Activated naive CD4-positive, alpha-beta T cell treated with anti-CD3 and anti-CD28 coated beads for 36 hours (primary cell): ENCODE measurements at regions of chr7 and their contacts with region 1.

Region 1: DNA sequence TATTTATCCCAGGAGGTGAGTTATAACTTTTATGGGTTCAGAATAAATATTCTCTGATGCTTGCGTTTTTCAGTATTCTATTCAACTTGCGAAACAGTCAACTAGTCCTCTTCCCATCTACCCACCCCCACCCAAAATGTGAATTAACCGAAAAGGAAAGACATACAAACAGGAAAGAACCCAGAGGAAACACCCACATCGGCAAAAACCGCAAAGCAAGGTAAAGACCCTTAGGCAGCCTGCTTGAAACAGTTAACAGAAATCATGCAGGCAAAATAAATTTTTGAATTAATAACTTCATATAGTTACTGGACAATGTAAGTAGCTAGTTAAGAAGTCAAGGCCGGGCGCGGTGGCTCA is 5.4 kb downstream of the ZC3HAV1 start:
- DNase-seq: peak; percentile 78
- H3K4me3 Mint-ChIP-seq: peak overlapping the region; percentile 82
- H3K27ac Mint-ChIP-seq: peak overlapping the region; percentile 97
- H3K4me1 Mint-ChIP-seq: peaks cover 35% of the 10 kb centered on the region
- H3K27me3 Mint-ChIP-seq: no peaks in the 10 kb centered on the region

Region 2: DNA sequence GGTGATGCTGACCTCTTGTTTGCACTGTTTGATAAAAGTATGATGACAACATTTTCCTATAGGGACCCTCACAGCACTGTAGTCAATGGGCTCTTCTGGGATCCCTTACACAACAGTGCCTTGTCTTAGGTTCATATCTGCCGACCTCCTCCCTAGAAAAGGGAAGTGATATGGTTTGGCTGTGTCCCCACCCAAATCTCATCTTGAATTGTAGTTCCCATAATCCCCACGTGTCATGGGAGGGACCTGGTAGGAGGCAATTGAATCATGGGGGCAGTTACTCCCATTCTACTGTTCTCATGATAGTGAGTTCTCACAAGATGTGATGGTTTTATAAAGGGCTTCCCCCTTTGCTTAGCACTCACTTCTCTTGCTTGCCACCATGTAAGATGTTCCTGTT is 17.6 kb before region 1 on chr7:
- CTCF ChIA-PET with region 1: interaction called, 27 read pairs
- intact Hi-C with region 1: loop called (anchors 1 kb)
- DNase-seq: no peak
- H3K4me3 Mint-ChIP-seq: no peak overlapping the region
- H3K27ac Mint-ChIP-seq: peak overlapping the region; percentile 89
- H3K4me1 Mint-ChIP-seq: peaks cover 85% of the 10 kb centered on the region
- H3K27me3 Mint-ChIP-seq: no peaks in the 10 kb centered on the region

Region 3: DNA sequence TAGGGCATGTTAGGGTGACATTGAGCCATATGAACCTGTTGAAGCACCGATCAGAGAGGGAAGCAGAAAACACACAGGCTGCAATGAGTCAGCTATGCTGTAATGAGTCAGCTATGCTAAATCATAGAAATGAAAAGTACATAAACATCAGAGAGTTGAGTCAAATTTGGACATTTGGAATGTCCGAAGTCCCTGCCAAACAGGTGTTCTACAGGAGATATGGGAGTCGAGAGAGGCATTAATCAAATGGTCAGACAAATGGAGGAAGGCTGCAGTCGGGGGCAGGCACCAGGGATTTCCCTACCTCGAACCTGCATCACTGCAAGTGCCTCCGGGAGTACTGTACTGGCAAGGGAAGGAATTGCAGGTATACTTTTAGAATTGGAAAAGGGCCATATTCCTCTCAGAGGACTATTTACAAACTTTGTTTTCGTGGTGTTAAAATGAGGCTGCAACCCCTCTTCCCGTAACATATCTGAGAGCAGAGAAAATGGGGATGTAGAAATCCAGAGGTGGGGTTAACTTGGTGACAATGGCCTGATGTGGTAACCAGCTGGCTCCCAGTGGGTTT is 14.2 kb after region 1 on chr7:
- CTCF ChIA-PET with region 1: interaction called, 4 read pairs
- intact Hi-C with region 1: loop called (anchors 1 kb)
- DNase-seq: peak; percentile 76
- H3K4me3 Mint-ChIP-seq: peak overlapping the region; percentile 46
- H3K27ac Mint-ChIP-seq: peak overlapping the region; percentile 17
- H3K4me1 Mint-ChIP-seq: peaks cover 52% of the 10 kb centered on the region
- H3K27me3 Mint-ChIP-seq: no peaks in the 10 kb centered on the region